ENCODE measurements at regions of chr4 and their contacts with region 1.

Region 1: DNA sequence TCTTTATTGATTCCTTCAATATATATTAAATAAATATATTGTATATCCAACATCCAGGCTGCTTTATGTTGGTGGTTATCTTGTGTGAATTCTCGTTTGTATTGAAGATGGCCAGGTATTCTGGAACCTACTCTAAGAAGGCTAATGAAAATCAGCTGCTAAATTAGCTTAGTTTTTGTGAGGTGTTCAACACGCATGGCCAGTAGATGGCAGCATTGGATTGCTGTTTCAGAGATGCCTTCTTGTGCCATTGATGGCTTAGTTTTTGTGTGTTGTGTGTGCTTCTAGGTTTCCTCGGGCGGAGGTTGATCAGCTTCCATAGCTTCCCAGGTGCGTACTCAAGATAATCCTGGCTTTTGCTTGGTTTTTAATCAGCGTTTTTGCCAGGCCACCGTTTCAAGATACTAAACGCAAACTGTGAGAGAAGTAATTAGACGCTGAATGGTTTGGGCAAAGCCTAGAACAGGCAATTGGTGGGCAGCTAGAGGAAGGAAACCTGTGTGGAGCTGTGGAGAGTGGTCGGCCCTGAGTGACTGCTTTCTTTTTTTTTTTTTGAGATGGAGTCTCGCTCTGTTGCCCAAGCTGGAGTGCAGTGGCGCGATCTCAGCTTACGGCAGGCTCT is 15.1 kb downstream of the NOCT start:
- DNase-seq: peak; percentile 65
- H3K4me3 ChIP-seq: no peak overlapping the region
- H3K27ac ChIP-seq: no peak overlapping the region
- H3K27me3 ChIP-seq: no peaks in the 10 kb centered on the region
- CTCF ChIP-seq: peak; percentile 87

Region 2: DNA sequence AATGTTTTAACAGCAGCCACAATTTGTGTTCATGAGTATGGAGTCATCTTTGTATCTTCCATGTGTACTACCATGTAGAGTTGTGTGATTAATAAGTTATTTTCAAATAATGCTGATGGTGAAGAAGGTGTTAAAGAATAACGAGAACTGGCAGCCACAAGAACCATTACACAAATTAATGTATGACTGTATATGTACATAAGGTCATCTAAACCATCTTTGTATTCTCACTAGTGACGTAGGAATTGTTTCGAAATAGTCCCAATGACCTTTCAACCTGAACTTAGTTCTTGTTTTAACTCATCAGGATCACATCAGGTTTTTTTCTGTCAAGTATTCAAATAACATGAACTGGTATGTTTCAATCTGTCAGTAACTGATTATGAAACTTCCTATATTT is 63.4 kb before region 1 on chr4:
- CTCF ChIA-PET with region 1: interaction called, 12 read pairs
- POLR2A ChIA-PET with region 1: no interaction called
- DNase-seq: no peak
- H3K4me3 ChIP-seq: no peak overlapping the region
- H3K27ac ChIP-seq: no peak overlapping the region
- H3K27me3 ChIP-seq: no peaks in the 10 kb centered on the region
- CTCF ChIP-seq: no peak

Region 3: GRCh38 chr4:139042981-139043460 is 12.3 kb after region 1 on chr4:
- CTCF ChIA-PET with region 1: interaction called, 39 read pairs
- POLR2A ChIA-PET with region 1: interaction called, 4 read pairs
- DNase-seq: no peak
- H3K4me3 ChIP-seq: no peak overlapping the region
- H3K27ac ChIP-seq: no peak overlapping the region
- H3K27me3 ChIP-seq: no peaks in the 10 kb centered on the region
- CTCF ChIP-seq: no peak

Region 4: GRCh38 chr4:139054791-139055376 is 24.2 kb after region 1 on chr4:
- CTCF ChIA-PET with region 1: interaction called, 10 read pairs
- POLR2A ChIA-PET with region 1: no interaction called
- DNase-seq: no peak
- H3K4me3 ChIP-seq: no peak overlapping the region
- H3K27ac ChIP-seq: no peak overlapping the region
- H3K27me3 ChIP-seq: no peaks in the 10 kb centered on the region
- CTCF ChIP-seq: no peak

Region 5: GRCh38 chr4:139099366-139099982 is 68.7 kb after region 1 on chr4:
- CTCF ChIA-PET with region 1: interaction called, 17 read pairs
- POLR2A ChIA-PET with region 1: no interaction called
- DNase-seq: peak; percentile 63
- H3K4me3 ChIP-seq: no peak overlapping the region
- H3K27ac ChIP-seq: no peak overlapping the region
- H3K27me3 ChIP-seq: no peaks in the 10 kb centered on the region
- CTCF ChIP-seq: peak; percentile 89

Region 6: GRCh38 chr4:139279760-139280620 is 249.3 kb after region 1 on chr4 and contains the start of gene MGARP:
- CTCF ChIA-PET with region 1: interaction called, 10 read pairs
- POLR2A ChIA-PET with region 1: no interaction called
- DNase-seq: no peak
- H3K4me3 ChIP-seq: peak within 1 kb of the TSS; percentile 69
- H3K27ac ChIP-seq: peak within 1 kb of the TSS; percentile 59
- H3K27me3 ChIP-seq: no peaks in the 10 kb centered on the region
- CTCF ChIP-seq: no peak
- polyA plus RNA-seq, gene MGARP: 42.6 and 57.7 TPM in 2 replicates